HepG2 (cell line): ENCODE measurements at regions of chr1 and their contacts with region 1.

Region 1: DNA sequence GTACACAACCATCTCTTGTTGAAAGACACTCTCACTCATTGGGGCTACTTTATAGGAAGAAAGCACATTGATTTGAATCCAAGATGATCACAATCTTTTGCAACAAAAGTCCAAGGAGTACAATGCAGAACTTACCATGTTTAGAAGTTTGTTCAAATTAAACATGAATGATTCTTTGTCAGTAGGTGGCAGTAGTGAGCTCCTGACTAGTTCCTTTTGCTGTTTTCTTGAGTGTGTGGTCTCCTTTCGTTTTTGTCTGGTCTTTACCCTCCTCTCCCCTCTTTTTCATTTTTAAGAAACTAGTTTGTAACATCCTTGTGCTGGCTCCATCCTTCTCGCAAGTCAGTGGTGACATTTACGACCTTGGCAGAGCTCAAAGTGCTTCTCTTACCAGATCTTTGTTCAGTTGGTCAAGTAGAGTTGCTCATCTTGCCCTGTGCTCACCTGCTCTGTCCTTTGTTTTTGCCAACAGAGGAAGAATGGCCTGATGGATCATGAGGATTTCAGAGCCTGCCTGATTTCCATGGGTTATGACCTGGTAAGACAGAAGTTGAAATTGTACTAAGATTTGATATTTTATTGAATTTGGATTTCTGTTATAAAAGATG is 35.7 kb upstream of the MTR start:
- DNase-seq: peak; percentile 35
- ATAC-seq: peak; percentile 53
- H3K4me3 ChIP-seq: no peak overlapping the region
- H3K27ac ChIP-seq: no peak overlapping the region
- H3K4me1 ChIP-seq: peaks cover 27% of the 10 kb centered on the region
- H3K27me3 ChIP-seq: no peaks in the 10 kb centered on the region
- CTCF ChIP-seq: peak; percentile 71
- EP300 ChIP-seq: no peak
- POLR2A ChIP-seq: no peak
- RAD21 ChIP-seq: no peak

Region 2: DNA sequence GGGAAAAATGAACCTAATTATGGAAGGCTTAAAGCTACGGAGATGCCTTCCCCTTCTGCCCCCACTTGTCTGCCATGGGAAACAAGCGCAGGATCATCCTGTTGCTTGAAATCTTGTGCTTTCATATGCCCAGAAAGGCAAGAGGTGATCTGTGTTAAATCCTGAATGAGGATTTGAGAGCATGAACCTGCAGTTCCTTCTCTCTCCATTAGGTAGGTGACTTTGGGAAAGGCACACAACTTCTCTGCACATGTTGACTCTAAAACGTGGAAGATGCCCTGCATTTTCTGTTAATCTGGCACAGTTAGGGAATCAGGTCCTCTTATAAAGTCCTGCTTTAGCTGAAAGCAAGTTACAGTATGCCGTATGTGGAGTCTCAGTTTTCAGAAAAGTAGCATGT is 10.9 kb before region 1 on chr1:
- CTCF ChIA-PET with region 1: no interaction called
- POLR2A ChIA-PET with region 1: no interaction called
- in situ Hi-C with region 1: no loop called
- intact Hi-C with region 1: no loop called
- DNase-seq: no peak
- ATAC-seq: peak; percentile 82
- H3K4me3 ChIP-seq: no peak overlapping the region
- H3K27ac ChIP-seq: no peak overlapping the region
- H3K4me1 ChIP-seq: no peaks in the 10 kb centered on the region
- H3K27me3 ChIP-seq: peaks cover 0 to 26% of the 10 kb centered on the region in 2 experiments; a peak in 3 of 5 replicates
- CTCF ChIP-seq: no peak
- EP300 ChIP-seq: no peak
- POLR2A ChIP-seq: no peak
- RAD21 ChIP-seq: no peak

Region 3: GRCh38 chr1:236868625-236869467 is 109.5 kb after region 1 on chr1:
- CTCF ChIA-PET with region 1: interaction called, 24 read pairs
- POLR2A ChIA-PET with region 1: no interaction called
- in situ Hi-C with region 1: loop called (anchors 5 kb)
- intact Hi-C with region 1: loop called (anchors 2 kb)
- DNase-seq: peak; percentile 60
- ATAC-seq: peak; percentile 93
- H3K4me3 ChIP-seq: no peak overlapping the region
- H3K27ac ChIP-seq: no peak overlapping the region
- H3K4me1 ChIP-seq: peaks cover 5% of the 10 kb centered on the region; the same call in 1 of the 2 replicates
- H3K27me3 ChIP-seq: no peaks in the 10 kb centered on the region
- CTCF ChIP-seq: peak; percentile 88
- EP300 ChIP-seq: no peak
- POLR2A ChIP-seq: no peak
- RAD21 ChIP-seq: peak; percentile 82

Region 4: GRCh38 chr1:237124856-237125462 is 365.6 kb after region 1 on chr1:
- CTCF ChIA-PET with region 1: interaction called, 7 read pairs
- POLR2A ChIA-PET with region 1: no interaction called
- in situ Hi-C with region 1: loop called (anchors 25 kb)
- intact Hi-C with region 1: no loop called
- DNase-seq: peak; percentile 13
- ATAC-seq: peak; percentile 72
- H3K4me3 ChIP-seq: no peak overlapping the region
- H3K27ac ChIP-seq: no peak overlapping the region
- H3K4me1 ChIP-seq: no peaks in the 10 kb centered on the region
- H3K27me3 ChIP-seq: no peaks in the 10 kb centered on the region; a peak in 1 of 5 replicates
- CTCF ChIP-seq: peak; percentile 72
- EP300 ChIP-seq: no peak
- POLR2A ChIP-seq: no peak
- RAD21 ChIP-seq: no peak

Region 5: GRCh38 chr1:237386362-237387143 is 627.2 kb after region 1 on chr1:
- CTCF ChIA-PET with region 1: interaction called, 3 read pairs
- POLR2A ChIA-PET with region 1: no interaction called
- in situ Hi-C with region 1: loop called (anchors 10 kb)
- intact Hi-C with region 1: no loop called
- DNase-seq: peak; percentile 17
- ATAC-seq: peak; percentile 30; the same call in 1 of the 3 replicates
- H3K4me3 ChIP-seq: no peak overlapping the region
- H3K27ac ChIP-seq: no peak overlapping the region
- H3K4me1 ChIP-seq: no peaks in the 10 kb centered on the region
- H3K27me3 ChIP-seq: peaks cover 0 to 2% of the 10 kb centered on the region in 2 experiments; a peak in 1 of 5 replicates
- CTCF ChIP-seq: peak; percentile 62
- EP300 ChIP-seq: no peak
- POLR2A ChIP-seq: no peak
- RAD21 ChIP-seq: peak; percentile 35; the same call in 1 of the 2 replicates

Region 6: GRCh38 chr1:237562242-237562823 is 803.0 kb after region 1 on chr1:
- CTCF ChIA-PET with region 1: no interaction called
- POLR2A ChIA-PET with region 1: no interaction called
- in situ Hi-C with region 1: loop called (anchors 10 kb)
- intact Hi-C with region 1: no loop called
- DNase-seq: peak; percentile 61
- ATAC-seq: peak; percentile 91
- H3K4me3 ChIP-seq: no peak overlapping the region
- H3K27ac ChIP-seq: no peak overlapping the region
- H3K4me1 ChIP-seq: peaks cover 5% of the 10 kb centered on the region; the same call in 1 of the 2 replicates
- H3K27me3 ChIP-seq: no peaks in the 10 kb centered on the region
- CTCF ChIP-seq: peak; percentile 53
- EP300 ChIP-seq: no peak
- POLR2A ChIP-seq: no peak
- RAD21 ChIP-seq: no peak